ENCODE measurements at regions of chr15 and their contacts with region 1.

Region 1: DNA sequence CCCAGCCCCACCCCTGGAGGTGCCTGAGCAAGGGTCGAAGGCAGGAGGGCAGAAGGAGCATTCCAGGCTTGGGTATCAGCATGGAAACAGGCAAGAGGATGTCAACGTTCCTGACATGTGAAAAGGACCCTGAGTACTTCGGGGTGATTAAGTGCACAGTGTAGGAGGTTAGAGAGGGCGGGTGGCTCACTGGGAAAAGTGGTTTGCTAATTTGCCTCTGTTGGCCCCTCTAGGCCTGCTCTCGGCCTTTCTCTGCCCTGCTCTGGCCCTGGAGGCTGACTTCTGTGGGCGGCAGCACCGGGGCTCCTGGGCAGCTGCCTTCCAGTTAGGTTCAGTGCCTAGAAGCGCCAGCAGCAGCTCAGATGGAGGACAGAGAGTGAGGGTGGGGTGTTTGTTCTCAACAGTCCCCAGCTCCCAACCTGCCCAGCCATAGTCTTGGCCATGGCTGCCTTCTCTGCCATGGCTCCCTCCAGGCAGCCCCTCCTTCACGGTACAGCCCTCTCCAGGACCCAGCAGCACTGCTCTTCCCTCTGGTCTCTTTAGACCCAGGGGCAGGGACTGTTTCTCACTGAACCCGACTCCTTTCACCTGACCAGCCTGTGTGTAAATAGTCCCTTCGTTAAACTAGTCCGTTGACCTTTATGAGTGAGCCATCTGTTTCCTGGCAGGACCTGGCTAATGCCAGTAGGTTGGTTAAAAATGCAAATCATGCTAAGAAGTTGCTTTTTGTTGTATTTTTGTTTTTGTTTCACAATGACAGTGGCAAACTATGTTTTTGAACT is 107.1 kb upstream of the TPM1 start:
- DNase-seq: no peak
- ATAC-seq: peak in 1 of 4 donors; percentile 16
- H3K4me3 ChIP-seq: no peak overlapping the region
- H3K27ac ChIP-seq: no peak overlapping the region
- H3K4me1 ChIP-seq: peaks cover 9% of the 10 kb centered on the region
- H3K27me3 ChIP-seq: no peaks in the 10 kb centered on the region
- CTCF ChIP-seq: no peak

Region 2: DNA sequence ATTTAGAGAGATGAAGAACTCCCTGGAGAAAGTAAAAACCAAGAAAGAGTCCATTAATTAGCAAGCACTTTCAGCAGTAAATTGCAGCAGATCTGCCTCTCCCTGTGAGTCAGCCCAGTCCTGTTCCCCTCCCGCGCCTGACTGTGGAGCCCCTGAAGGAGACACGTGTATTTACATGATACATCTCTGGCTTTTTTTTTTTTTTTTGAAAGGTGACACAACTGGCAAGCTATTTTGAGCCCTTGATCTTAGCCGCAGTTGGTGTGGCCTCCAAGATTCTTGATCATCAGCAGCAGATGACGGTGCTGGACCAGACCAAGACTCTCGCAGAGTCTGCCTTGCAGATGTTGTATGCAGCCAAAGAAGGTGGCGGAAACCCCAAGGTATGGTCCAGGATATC is 164.7 kb before region 1 on chr15:
- intact Hi-C with region 1: no loop called
- DNase-seq: peak; percentile 65 to 90
- ATAC-seq: peak; percentile 94 to 97 (median 96)
- H3K4me3 ChIP-seq: no peak overlapping the region
- H3K27ac ChIP-seq: peak overlapping the region; percentile 83
- H3K4me1 ChIP-seq: peaks cover 13% of the 10 kb centered on the region
- H3K27me3 ChIP-seq: no peaks in the 10 kb centered on the region
- CTCF ChIP-seq: no peak

Region 3: GRCh38 chr15:62900071-62900802 is 35.3 kb before region 1 on chr15:
- intact Hi-C with region 1: loop called in 1 of 2 experiments (anchors 5 kb)
- DNase-seq: no peak
- ATAC-seq: peak in 3 of 4 donors; percentile 56 to 68 (median 59)
- H3K4me3 ChIP-seq: no peak overlapping the region
- H3K27ac ChIP-seq: peak overlapping the region; percentile 60
- H3K4me1 ChIP-seq: peaks cover 49% of the 10 kb centered on the region
- H3K27me3 ChIP-seq: no peaks in the 10 kb centered on the region
- CTCF ChIP-seq: no peak

Measured in psoas muscle (tissue), 8 donors.